ENCODE measurements at regions of chr11 and their contacts with region 1.

Region 1: DNA sequence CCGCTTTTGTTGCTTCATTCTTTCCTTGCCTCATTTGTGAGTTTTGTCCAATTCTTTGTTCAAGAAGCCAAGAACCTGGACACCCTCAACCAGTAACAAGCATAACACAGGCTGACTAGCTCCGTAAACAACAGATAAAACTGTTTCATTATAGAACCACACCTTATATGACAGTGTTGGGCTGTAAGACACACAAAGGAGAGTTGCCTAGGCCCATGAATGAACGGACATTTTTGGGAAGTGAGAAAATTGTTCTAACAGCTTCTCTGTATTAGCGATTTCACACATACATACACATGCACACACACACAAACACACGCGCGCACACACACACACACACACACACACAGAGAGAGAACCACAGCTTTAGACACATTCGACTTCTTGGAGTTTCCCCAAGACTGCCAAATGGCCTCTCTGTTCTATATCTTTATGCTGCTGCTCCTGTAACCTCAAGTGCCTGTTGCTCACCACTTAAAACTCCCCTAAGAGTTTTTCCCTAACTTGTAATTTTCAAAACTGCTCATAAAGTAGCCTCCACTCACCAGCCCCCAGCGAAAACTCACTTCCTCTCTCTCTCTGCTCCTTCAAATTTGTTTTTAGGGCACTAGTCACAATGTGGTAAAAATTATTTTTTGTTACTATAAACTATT is 35.9 kb downstream of the CTSC start:
- DNase-seq: no peak
- H3K4me3 Mint-ChIP-seq: no peak overlapping the region
- H3K27ac Mint-ChIP-seq: peak overlapping the region; percentile 77
- H3K4me1 Mint-ChIP-seq: peaks cover 37% of the 10 kb centered on the region
- H3K27me3 Mint-ChIP-seq: no peaks in the 10 kb centered on the region

Region 2: DNA sequence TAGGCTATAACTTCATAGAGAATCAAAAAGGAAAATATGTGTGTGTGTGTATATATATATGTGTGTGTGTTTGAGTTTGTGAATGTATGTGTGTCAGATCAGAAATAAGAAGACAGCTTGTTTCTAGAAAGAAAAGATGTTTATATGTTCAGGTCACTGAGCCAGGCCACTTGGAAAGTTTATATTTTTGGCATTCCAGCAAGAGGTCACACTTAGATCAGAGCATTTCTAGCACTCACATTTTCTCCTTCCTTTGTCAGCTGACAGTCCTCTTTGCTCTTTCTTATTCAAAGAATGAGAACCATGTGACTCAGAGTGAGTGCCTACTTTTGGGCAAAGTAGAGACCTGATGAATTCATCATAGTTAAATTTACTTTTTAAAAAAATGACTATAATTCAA is 149.2 kb before region 1 on chr11:
- intact Hi-C with region 1: no loop called
- DNase-seq: no peak
- H3K4me3 Mint-ChIP-seq: no peak overlapping the region
- H3K27ac Mint-ChIP-seq: no peak overlapping the region
- H3K4me1 Mint-ChIP-seq: no peaks in the 10 kb centered on the region
- H3K27me3 Mint-ChIP-seq: peaks cover 5% of the 10 kb centered on the region

Region 3: GRCh38 chr11:88277349-88277915 is 24.2 kb before region 1 on chr11:
- intact Hi-C with region 1: no loop called
- DNase-seq: no peak
- H3K4me3 Mint-ChIP-seq: no peak overlapping the region
- H3K27ac Mint-ChIP-seq: no peak overlapping the region
- H3K4me1 Mint-ChIP-seq: no peaks in the 10 kb centered on the region
- H3K27me3 Mint-ChIP-seq: no peaks in the 10 kb centered on the region

Region 4: DNA sequence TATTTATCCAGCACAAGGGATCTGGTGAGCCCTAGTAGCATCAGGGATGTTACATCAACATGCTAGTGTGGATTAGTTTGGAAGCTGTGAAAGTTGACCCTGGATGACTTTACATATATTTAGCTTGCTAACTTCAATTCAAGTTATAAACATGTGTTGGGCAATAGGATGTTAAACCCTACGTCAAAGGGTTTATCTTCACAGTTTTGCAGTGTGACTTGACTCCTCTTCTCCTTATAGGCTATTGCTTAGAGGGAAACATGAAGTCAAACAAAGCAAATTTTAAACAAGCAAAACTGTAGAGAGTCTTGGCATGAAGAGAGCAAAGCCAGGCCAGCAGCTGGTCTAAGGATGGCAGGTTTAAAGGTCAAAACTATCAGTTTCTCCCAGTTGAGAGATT is 47.3 kb after region 1 on chr11:
- intact Hi-C with region 1: no loop called
- DNase-seq: no peak
- H3K4me3 Mint-ChIP-seq: no peak overlapping the region
- H3K27ac Mint-ChIP-seq: no peak overlapping the region
- H3K4me1 Mint-ChIP-seq: peaks cover 35% of the 10 kb centered on the region
- H3K27me3 Mint-ChIP-seq: no peaks in the 10 kb centered on the region

Region 5: GRCh38 chr11:88377144-88377543 is 75.5 kb after region 1 on chr11:
- intact Hi-C with region 1: no loop called
- DNase-seq: no peak
- H3K4me3 Mint-ChIP-seq: no peak overlapping the region
- H3K27ac Mint-ChIP-seq: no peak overlapping the region
- H3K4me1 Mint-ChIP-seq: peaks cover 10% of the 10 kb centered on the region
- H3K27me3 Mint-ChIP-seq: no peaks in the 10 kb centered on the region

Region 6: DNA sequence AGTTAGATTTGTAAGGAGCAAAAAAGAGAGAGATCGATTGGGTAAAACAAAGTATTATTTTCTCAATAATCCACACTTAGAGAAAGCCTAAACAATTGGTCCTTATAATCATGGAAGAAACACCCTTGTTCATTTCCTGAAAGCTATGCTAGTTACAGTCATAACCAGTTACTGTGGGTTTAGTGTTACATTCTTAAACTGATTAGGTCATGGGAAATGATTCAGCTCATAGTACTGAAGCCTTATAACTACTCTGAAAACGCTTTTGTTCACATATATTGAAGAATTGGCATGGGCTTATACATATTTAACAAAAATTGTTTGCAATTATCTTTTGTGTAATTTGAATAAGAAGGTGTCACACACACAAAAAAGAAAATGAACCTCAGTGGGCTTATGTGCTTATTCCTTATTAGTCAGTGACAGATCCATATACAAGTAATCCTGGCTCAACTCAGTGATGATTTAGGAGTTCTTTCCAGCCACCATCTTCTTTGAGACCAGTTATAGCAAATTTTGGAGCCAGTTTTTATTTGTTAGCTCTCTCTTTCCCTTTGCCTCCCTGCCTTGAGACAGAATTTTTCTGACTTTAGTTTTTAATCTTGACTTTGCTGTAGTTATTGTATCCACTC is 234.4 kb after region 1 on chr11:
- intact Hi-C with region 1: loop called (anchors 10 kb)
- DNase-seq: no peak
- H3K4me3 Mint-ChIP-seq: no peak overlapping the region
- H3K27ac Mint-ChIP-seq: peak overlapping the region; percentile 16
- H3K4me1 Mint-ChIP-seq: peaks cover 20% of the 10 kb centered on the region
- H3K27me3 Mint-ChIP-seq: peaks cover 5% of the 10 kb centered on the region

Measured in activated T-helper 2 cell treated with anti-CD3 and anti-CD28 coated beads, Interferon-gamma antibody, Interleukin-2, Interleukin-4, amounts not matched to agents 10 μg/mL and 5 μg/mL and 100 μg/mL, durations not matched to agents 14 hours and 24 hours and 36 hours (primary cell).